ENCODE measurements at regions of chr1 and their contacts with region 1.

Region 1: GRCh38 chr1:248807067-248807737 is 18.5 kb downstream of the SH3BP5L start:
- DNase-seq: peak; percentile 69
- H3K4me3 Mint-ChIP-seq: no peak overlapping the region
- H3K27ac Mint-ChIP-seq: no peak overlapping the region
- H3K4me1 Mint-ChIP-seq: no peaks in the 10 kb centered on the region
- H3K27me3 Mint-ChIP-seq: peaks cover 2% of the 10 kb centered on the region

Region 2: GRCh38 chr1:247936415-247936814 is 870.8 kb before region 1 on chr1:
- CTCF ChIA-PET with region 1: no interaction called
- POLR2A ChIA-PET with region 1: no interaction called
- intact Hi-C with region 1: loop called (anchors 5 kb)
- DNase-seq: no peak
- H3K4me3 Mint-ChIP-seq: no peak overlapping the region
- H3K27ac Mint-ChIP-seq: no peak overlapping the region
- H3K4me1 Mint-ChIP-seq: no peaks in the 10 kb centered on the region
- H3K27me3 Mint-ChIP-seq: no peaks in the 10 kb centered on the region

Region 3: GRCh38 chr1:248243204-248243603 is 564.0 kb before region 1 on chr1:
- CTCF ChIA-PET with region 1: interaction called, 9 read pairs
- POLR2A ChIA-PET with region 1: no interaction called
- intact Hi-C with region 1: loop called (anchors 1 kb)
- DNase-seq: peak; percentile 29
- H3K4me3 Mint-ChIP-seq: no peak overlapping the region
- H3K27ac Mint-ChIP-seq: no peak overlapping the region
- H3K4me1 Mint-ChIP-seq: peaks cover 2% of the 10 kb centered on the region
- H3K27me3 Mint-ChIP-seq: peaks cover 15% of the 10 kb centered on the region

Region 4: DNA sequence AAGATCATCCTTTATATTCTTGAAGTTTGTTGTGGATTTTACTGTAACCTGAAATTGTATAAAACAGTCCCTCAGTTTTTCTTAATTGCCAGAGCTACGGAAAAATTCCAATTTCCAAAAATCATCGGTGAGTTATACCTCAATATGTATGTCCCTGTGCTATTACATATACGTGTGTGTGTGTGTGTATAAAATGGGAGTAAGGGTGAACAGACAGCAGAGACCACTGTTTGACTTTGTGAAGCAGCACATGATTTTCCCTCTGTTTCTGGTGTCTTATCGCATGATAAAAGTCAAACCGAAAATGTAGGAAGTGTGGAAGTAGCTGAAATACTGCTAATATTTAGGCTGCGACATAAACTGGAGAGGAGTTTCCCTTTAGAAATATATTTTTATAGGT is 403.2 kb before region 1 on chr1:
- CTCF ChIA-PET with region 1: interaction called, 4 read pairs
- POLR2A ChIA-PET with region 1: no interaction called
- intact Hi-C with region 1: loop called (anchors 1 kb)
- DNase-seq: no peak
- H3K4me3 Mint-ChIP-seq: no peak overlapping the region
- H3K27ac Mint-ChIP-seq: no peak overlapping the region
- H3K4me1 Mint-ChIP-seq: no peaks in the 10 kb centered on the region
- H3K27me3 Mint-ChIP-seq: no peaks in the 10 kb centered on the region

Region 5: DNA sequence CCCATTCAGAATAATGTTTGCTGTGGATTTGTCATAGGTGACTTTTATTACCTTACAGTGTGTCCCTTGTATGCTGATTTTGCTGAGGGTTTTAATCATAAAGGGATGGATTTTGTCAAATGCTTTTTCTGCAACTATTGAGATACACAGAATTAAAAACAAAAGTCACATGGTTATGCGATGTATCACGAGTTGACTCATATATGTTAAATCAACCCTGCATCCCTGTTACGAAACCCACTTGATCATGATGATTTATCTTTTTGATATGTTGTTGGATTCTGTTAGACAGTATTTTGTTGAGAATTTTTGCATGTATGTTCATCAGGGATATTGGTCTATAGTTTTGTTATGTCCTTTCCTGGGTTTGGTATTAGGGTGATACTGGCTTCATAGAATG is 221.9 kb before region 1 on chr1:
- CTCF ChIA-PET with region 1: no interaction called
- POLR2A ChIA-PET with region 1: no interaction called
- intact Hi-C with region 1: no loop called
- DNase-seq: no peak
- H3K4me3 Mint-ChIP-seq: no peak overlapping the region
- H3K27ac Mint-ChIP-seq: no peak overlapping the region
- H3K4me1 Mint-ChIP-seq: peaks cover 7% of the 10 kb centered on the region
- H3K27me3 Mint-ChIP-seq: no peaks in the 10 kb centered on the region

Region 6: GRCh38 chr1:248622570-248623001 is 184.6 kb before region 1 on chr1:
- CTCF ChIA-PET with region 1: interaction called, 46 read pairs
- POLR2A ChIA-PET with region 1: no interaction called
- intact Hi-C with region 1: loop called (anchors 1 kb)
- DNase-seq: no peak
- H3K4me3 Mint-ChIP-seq: no peak overlapping the region
- H3K27ac Mint-ChIP-seq: no peak overlapping the region
- H3K4me1 Mint-ChIP-seq: peaks cover 2% of the 10 kb centered on the region
- H3K27me3 Mint-ChIP-seq: no peaks in the 10 kb centered on the region

Region 7: GRCh38 chr1:248696261-248696660 is 110.9 kb before region 1 on chr1:
- CTCF ChIA-PET with region 1: no interaction called
- POLR2A ChIA-PET with region 1: no interaction called
- intact Hi-C with region 1: loop called (anchors 1 kb)
- DNase-seq: peak; percentile 28
- H3K4me3 Mint-ChIP-seq: no peak overlapping the region
- H3K27ac Mint-ChIP-seq: no peak overlapping the region
- H3K4me1 Mint-ChIP-seq: no peaks in the 10 kb centered on the region
- H3K27me3 Mint-ChIP-seq: peaks cover 6% of the 10 kb centered on the region